ENCODE measurements at regions of chr7 and their contacts with region 1.

Region 1: DNA sequence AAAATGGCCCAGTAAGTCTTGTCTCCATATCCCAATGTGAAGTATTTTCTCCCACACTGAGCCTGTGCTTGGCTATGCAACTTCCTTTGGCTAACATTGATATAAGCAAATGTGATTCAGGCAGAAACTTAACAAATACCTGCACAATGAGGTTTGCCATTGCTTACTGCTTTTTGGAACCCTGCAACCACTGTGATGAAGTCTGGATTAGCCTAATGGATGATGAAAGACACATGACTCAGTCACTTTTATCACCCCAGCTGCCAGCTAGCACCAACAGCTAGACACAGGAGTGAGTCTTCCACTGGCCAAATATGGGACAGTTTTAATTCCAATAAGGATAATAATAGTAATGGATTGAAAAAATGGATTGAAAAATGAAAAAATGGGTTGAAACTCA is 854.5 kb downstream of the GRM8 start:
- DNase-seq: no peak
- ATAC-seq: no peak

Region 2: DNA sequence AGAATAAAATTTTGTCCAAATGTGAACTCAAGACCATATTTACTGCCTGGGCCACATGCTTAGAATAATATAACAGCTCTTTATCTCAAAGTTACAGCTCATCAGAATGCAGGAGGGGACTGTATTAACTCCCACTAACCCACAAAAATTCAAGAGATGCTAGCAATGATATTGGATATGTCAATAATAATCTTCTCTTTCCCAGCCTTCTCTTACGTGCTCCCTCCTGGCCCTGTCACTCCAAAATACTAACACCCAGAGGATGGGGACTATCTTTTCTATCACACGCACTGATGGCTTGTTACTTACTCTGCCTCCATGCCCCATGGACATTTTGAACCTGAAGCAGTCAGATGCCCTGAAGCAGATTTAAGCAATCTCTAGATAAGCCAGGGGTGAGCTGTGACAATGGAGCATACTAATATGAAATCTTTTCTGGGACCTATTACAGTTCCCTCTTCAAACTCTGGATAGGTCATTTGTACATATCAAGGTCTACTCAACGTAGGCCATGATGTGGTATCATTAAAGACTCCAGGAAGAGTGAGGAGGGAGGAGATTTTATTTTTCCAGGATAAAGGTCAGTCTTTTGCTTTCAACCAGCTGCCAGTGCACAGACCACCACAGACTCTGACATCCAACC is 51.5 kb after region 1 on chr7:
- intact Hi-C with region 1: loop called (anchors 5 kb)
- DNase-seq: no peak
- ATAC-seq: no peak

Region 3: DNA sequence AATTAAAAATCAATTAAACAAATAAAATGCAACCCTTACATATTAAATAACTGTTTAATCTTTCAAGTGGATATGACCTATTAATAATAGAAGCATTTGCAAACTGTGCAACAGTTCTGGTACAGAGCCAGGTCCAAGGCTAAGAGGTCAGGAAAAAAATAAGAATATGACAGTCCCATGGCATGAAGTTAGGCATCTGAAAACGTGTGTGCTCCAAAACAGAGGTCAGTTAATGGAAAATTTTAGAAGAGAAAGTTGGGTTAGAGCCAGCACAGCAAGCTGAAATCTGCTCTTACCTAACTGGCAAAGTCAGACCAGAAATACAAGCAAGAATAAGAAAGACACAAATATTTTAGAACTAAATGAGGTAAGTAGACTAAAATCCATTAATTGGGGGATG is 96.7 kb after region 1 on chr7:
- intact Hi-C with region 1: loop called (anchors 5 kb)
- DNase-seq: no peak
- ATAC-seq: peak; percentile 48

Measured in Right ventricle myocardium inferior (tissue), 1 donor.